ENCODE measurements at regions of chr9 and their contacts with region 1.

Region 1: DNA sequence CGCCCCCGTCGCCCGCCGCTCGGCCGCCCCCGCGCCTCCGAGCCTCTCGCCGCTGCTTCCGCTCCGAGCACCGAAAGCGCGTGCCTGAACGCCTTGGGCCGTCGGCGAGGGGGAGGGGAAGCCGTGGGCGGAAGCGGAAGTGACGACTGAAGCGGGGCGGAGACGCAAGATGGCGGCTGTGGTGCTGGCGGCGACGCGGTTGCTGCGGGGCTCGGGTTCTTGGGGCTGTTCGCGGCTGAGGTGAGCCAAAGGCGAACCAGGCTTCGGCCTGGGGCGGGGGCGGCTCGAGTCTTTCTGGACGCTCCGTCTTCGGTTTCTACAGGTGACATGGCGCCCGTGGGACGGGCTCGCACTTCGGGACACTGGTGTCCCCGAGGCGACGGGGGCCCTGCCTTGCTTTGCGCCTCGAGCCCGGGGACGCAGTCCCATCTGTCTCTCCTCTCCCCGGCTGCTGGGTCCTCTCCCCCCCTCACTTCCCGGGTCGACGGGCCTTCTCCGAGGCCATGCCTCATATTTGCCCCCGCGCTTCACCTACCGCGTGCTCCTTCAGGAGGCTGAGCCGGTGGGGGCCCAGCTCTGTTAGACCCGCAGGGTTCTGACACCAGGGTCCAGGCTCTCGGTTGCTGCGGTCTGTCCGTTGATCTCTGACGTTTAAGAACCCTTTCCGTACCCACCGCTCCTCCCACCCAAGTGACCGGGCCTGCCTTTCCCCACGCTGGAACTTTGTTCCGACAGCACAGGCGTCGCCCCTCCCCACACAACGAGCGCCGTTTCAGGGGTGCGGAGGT is at the starts of genes ENTR1 and PMPCA:
- DNase-seq: peak; percentile 77 to 92
- H3K4me3 ChIP-seq: peak within 1 kb of the TSS; percentile 94
- H3K27ac ChIP-seq: peak within 1 kb of the TSS; percentile 51; the same call in 1 of the 2 replicates
- H3K4me1 ChIP-seq: peaks cover 17% of the 10 kb centered on the region; the same call in 1 of the 2 replicates
- H3K27me3 ChIP-seq: no peaks in the 10 kb centered on the region
- CTCF ChIP-seq: no peak
- total RNA-seq, gene ENTR1: 67.9 and 82.9 TPM in 2 replicates
- total RNA-seq, gene PMPCA: 78.1 and 86.5 TPM in 2 replicates

Region 2: DNA sequence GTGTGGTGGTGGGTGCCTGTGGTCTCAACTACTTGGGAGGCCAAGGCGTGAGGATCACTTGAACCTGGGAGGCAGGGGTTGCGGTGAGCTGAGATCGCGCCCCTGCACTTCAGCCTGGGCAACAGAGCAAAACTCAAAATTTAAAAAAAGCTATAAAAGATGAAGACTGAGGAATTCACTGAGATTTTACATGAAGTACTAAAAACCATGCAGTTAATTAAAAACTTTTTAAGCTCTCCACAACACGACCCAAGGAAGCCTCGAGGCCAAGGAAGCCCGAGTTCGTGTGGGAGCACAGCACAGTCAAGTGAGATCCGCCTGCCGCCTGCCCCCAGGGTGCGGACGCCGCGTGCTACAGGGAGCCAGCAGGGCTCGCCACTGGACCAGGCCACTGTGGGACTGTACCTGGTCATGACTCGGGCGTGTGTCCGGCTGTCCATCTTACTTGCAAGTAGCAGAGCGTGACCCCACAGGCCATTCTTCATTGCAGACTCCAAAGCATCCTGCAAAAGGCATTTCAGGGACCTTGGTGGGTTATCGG is 50.1 kb after region 1 on chr9:
- CTCF ChIA-PET with region 1: no interaction called
- POLR2A ChIA-PET with region 1: no interaction called
- intact Hi-C with region 1: loop called (anchors 2 kb)
- DNase-seq: no peak
- H3K4me3 ChIP-seq: no peak overlapping the region
- H3K27ac ChIP-seq: no peak overlapping the region
- H3K4me1 ChIP-seq: no peaks in the 10 kb centered on the region
- H3K27me3 ChIP-seq: no peaks in the 10 kb centered on the region
- CTCF ChIP-seq: no peak

Measured in PC-9 (cell line).